ENCODE measurements at regions of chr1 and their contacts with region 1.

Region 1: DNA sequence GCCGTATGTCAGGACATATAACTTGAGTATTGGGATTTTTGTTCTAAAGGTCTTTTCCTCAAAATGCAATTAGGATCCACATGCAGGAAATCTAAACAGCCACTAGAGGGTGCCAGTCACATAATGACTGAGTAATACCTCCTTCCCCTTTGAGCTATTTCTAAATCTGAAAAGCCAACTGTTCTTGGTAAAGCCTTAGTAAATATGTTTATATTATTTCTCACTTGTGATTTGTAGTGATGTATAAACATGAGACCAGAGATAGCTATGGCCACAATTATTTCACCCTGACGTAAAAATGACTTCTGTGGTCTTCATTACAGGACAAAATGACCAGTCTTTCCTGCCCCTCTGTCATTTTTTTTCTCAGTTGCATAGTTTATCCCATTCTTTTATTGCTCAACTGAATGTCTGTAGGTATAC is 41.0 kb upstream of the DR1 start:
- DNase-seq: peak; percentile 54
- H3K4me3 ChIP-seq: no peak overlapping the region
- H3K27ac ChIP-seq: no peak overlapping the region
- H3K4me1 ChIP-seq: no peaks in the 10 kb centered on the region
- H3K27me3 ChIP-seq: no peaks in the 10 kb centered on the region
- CTCF ChIP-seq: peak; percentile 63 to 66
- POLR2A ChIP-seq: no peak

Region 2: DNA sequence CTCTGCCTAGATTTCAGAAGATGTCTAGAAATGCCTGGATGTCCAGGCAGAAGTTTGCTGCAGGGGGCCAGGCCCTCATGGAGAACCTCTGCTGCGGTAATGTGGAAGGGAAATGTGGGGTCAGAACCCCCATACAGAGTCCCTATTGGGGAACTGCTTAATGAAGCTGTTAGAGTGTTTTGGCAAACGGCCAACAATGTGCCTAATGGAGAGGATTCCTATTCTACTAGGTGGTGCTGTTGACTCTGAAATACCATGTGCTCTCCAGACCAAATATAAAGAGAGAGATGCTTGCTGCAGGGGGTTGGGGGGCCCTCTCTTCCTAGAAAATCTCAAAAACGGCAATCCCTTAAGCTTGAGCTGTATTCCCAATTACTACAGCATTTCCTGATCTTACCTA is 16.2 kb before region 1 on chr1:
- CTCF ChIA-PET with region 1: interaction called, 22 read pairs
- POLR2A ChIA-PET with region 1: no interaction called
- dilution Hi-C with region 1: no loop called
- intact Hi-C with region 1: no loop called
- DNase-seq: no peak
- H3K4me3 ChIP-seq: no peak overlapping the region
- H3K27ac ChIP-seq: no peak overlapping the region
- H3K4me1 ChIP-seq: no peaks in the 10 kb centered on the region
- H3K27me3 ChIP-seq: no peaks in the 10 kb centered on the region
- CTCF ChIP-seq: no peak
- POLR2A ChIP-seq: no peak

Region 3: DNA sequence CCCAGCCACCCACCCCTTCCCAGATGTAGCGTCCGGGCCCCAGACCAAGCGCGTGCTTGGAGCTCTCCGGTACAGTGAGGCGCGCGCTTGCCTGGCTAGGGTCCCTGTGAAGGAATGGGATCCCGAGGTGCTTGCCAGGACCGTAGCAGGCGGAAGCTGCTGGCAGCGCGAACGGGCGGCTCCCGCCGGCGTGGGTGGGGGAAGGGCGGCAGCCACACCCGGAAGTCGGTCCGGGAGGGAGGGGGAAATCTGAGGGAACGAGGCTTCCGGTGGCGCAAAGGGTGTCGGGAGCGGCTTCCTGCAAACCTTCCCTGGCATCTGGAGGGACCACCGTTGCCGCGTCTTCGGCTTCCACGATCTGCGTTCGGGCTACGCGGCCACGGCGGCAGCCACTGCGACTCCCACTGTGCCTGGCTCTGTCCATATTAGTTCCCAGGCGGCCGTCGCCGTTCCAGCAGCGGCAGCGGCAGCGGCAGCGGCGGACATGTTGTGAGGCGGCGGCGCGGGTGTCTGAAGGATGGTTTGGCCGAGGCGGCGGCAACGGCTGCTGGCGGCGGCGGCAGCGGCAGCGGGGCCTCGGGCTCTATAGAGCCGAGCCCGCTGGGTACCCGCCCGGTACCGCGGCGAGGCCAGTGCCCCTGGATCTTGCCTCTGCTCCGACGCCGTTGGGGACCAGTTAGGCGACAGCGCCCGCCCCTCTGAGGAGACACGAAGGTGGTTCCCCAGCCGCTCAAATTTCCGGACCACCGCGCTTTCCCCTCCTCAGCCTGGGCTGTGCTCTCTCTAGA is 41.1 kb after region 1 on chr1 and contains the start of gene DR1:
- CTCF ChIA-PET with region 1: interaction called, 34 read pairs
- POLR2A ChIA-PET with region 1: interaction called, 6 read pairs
- dilution Hi-C with region 1: no loop called
- intact Hi-C with region 1: loop called (anchors 1 kb)
- DNase-seq: peak; percentile 94
- H3K4me3 ChIP-seq: peak within 1 kb of the TSS; percentile 89 to 99 (median 97)
- H3K27ac ChIP-seq: peak within 1 kb of the TSS; percentile 88
- H3K4me1 ChIP-seq: peaks cover 22% of the 10 kb centered on the region
- H3K27me3 ChIP-seq: no peaks in the 10 kb centered on the region
- CTCF ChIP-seq: no peak
- POLR2A ChIP-seq: peak; percentile 93
- total RNA-seq, gene DR1: 49.4 and 52.2 TPM in 2 replicates

Region 4: DNA sequence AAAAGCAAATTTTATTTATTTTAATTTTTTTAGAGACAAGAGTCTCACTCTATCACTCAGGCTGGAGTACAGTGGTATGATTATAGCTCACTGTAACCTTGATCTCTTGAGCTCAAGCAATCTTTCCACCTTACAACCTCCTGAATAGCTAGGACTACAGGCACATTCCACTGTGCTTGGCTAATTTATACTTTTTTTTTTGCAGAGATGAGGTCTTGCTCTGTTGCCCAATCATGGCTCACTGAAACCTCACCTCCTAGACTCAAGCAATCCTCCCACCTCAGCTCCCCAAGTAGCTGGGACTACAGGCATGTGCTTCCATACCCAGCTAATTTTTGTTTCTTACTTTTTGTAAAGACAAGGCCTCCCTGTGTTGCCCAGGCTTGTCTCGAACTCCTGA is 90.5 kb after region 1 on chr1:
- CTCF ChIA-PET with region 1: interaction called, 10 read pairs
- POLR2A ChIA-PET with region 1: interaction called, 3 read pairs
- dilution Hi-C with region 1: no loop called
- intact Hi-C with region 1: no loop called
- DNase-seq: no peak
- H3K4me3 ChIP-seq: no peak overlapping the region
- H3K27ac ChIP-seq: no peak overlapping the region
- H3K4me1 ChIP-seq: no peaks in the 10 kb centered on the region
- H3K27me3 ChIP-seq: peaks cover 0 to 2% of the 10 kb centered on the region in 2 experiments
- CTCF ChIP-seq: no peak
- POLR2A ChIP-seq: no peak

Region 5: DNA sequence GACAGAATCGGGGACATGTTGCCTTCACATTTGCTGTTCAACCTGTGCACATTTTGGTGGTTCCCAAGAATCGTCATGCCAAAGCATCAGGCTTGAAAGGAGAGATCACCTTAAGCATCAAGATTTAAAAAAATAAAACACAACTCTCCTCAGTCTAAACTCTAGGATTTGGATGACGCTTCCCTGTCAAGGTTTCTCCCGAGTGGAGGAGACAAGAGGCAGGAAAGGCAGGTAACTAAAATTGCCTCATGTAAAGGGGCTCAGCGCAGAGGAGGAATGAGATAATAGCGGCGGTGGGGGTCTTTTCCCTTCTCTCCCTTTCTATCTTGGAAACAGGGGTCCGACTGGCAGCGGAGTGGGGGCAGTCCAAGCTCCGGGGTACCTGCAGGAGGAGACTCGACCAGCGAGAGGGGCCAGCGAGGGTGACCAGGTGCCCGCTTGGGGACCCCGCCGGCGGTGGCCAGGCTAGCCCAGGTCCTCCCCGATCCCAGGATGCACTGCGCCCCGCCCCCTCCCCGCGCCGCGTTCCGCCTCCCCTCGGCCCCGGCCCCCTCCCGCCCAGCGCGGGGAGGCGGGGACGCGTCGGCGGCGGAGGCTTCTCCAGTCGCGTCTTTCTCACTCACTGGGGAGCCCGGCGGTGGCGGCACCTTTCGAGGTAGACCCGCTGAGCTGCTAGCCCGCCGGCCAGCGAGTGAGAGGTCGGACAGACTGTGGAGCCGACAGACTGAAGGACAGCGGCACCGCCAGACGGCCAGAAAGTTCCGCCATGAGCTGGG is 143.0 kb after region 1 on chr1 and contains the start of gene FNBP1L:
- CTCF ChIA-PET with region 1: interaction called, 20 read pairs
- POLR2A ChIA-PET with region 1: no interaction called
- dilution Hi-C with region 1: no loop called
- intact Hi-C with region 1: no loop called
- DNase-seq: peak; percentile 78
- H3K4me3 ChIP-seq: peak within 1 kb of the TSS; percentile 14 to 80 (median 70)
- H3K27ac ChIP-seq: peak within 1 kb of the TSS; percentile 65
- H3K4me1 ChIP-seq: peaks cover 13% of the 10 kb centered on the region
- H3K27me3 ChIP-seq: no peaks in the 10 kb centered on the region
- CTCF ChIP-seq: no peak
- POLR2A ChIP-seq: peak; percentile 85
- total RNA-seq, gene FNBP1L: 56.4 and 56.5 TPM in 2 replicates

Region 6: GRCh38 chr1:93708734-93709481 is 404.2 kb after region 1 on chr1:
- CTCF ChIA-PET with region 1: no interaction called
- POLR2A ChIA-PET with region 1: no interaction called
- dilution Hi-C with region 1: no loop called
- intact Hi-C with region 1: no loop called
- DNase-seq: peak; percentile 71
- H3K4me3 ChIP-seq: no peak overlapping the region
- H3K27ac ChIP-seq: no peak overlapping the region
- H3K4me1 ChIP-seq: peaks cover 3% of the 10 kb centered on the region
- H3K27me3 ChIP-seq: peaks cover 0 to 2% of the 10 kb centered on the region in 2 experiments
- CTCF ChIP-seq: no peak
- POLR2A ChIP-seq: no peak

Measured in endothelial cell of umbilical vein (primary cell).